Astrocyte of the cerebellum (primary cell): ENCODE measurements at regions of chr12 and their contacts with region 1.

Region 1: GRCh38 chr12:50542448-50542847 is 37.7 kb downstream of the DIP2B start:
- DNase-seq: no peak
- H3K4me3 ChIP-seq: no peak overlapping the region
- CTCF ChIP-seq: no peak

Region 2: DNA sequence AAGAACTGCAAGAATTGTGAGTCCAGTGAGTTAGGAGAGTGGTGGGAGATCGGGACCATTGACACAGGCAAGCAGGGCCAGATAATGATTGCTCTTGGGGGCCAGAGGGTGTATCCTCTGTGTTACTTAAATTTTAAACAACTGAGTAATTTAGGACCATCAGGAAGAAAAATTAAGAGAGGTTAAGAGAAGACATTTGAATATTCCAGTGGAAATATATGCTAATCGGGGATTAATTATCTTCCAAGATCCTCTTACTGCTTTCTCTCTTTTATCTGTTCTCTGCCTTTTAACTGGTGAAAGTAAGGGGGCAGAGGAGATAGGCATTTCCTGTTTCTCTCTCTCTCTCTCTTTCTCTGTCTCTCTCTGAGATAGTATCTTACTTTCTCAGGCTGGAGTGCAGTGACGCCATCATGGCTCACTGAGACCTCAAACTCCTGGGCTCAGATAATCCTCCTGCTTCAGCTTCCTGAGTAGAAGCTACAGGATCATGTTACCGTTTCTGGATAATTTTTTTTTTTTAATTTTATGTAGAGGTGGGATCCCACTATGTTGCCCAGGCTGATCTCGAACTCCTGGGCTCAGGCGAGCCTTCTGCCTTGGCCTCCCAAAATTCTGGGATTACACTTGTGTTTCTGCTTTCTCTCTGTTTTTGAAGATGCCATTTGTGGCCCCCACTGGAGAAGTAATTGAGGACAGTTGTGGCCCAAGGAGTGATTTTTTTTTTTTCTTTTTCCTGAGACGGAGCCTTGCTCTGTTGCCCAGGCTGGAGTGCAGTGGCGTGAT is 47.4 kb after region 1 on chr12:
- in situ Hi-C with region 1: loop called (anchors 5 kb)
- DNase-seq: no peak
- H3K4me3 ChIP-seq: no peak overlapping the region
- CTCF ChIP-seq: no peak

Region 3: DNA sequence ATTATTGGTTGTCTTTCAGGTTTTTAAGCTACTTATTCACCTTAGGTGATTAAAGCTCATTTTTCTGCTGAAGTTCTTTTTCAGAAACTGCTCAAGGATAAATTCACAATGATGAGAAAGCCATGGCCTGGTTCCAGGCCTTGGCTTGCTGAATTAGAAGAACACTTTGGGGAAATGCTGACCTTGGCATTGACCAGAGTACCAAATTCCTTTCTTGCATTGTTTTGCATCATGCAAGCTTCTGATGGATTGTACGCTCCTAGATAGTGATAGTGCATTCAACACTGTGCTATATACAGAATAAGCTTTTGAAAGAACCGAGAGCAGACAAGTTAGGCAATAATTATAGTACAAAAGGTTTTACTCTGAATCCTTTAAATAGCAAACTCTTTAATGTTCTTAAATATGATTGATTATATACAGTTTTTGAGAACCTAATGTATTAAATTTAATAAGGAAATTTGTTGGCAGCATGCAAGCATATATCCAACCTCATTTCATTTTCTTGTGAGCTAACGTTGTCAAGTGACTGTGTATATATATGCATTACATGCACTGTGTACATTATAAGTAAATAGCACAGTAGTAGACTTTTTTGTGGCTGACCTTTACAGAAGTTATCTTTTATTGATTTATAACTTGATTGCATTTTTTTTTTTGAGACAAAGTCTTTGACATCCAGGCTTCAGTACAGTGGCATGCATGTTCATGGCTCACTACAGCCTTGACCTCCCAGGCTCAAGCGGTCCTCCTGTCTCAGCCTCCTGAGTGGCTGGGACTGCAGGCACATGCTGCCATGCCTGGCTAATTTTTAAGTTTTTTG is 61.6 kb after region 1 on chr12:
- in situ Hi-C with region 1: no loop called
- DNase-seq: peak; percentile 71
- H3K4me3 ChIP-seq: no peak overlapping the region
- CTCF ChIP-seq: no peak